ENCODE measurements at regions of chr7 and their contacts with region 1.

Region 1: DNA sequence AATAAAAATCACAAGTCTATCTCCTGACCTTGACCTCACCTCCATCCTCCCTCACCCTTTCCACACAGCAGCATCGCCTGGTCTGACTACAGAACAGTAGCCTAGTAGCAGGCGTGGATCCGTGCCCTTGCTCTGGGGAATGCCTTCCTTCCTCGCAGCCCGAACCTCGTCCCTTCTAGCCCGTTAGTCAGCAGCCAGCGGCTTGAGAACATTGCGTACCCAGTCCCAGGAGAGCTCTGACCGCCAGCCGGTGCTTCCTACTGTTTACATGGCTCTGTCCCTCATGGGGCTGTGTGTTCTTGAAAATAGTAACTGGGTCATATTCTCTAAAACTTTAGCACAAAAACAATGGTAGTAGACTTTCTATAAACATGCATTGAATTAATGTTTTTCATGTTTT is 682.7 kb upstream of the IGFBP3 start:
- DNase-seq: peak; percentile 93
- ATAC-seq: peak; percentile 96

Region 2: GRCh38 chr7:46932676-46933424 is 329.1 kb after region 1 on chr7:
- intact Hi-C with region 1: loop called in 1 of 2 experiments (anchors 5 kb)
- DNase-seq: peak; percentile 52
- ATAC-seq: peak; percentile 85 to 90

Measured in left cardiac atrium (tissue), 4 donors.